ENCODE measurements at regions of chr18 and their contacts with region 1.

Region 1: DNA sequence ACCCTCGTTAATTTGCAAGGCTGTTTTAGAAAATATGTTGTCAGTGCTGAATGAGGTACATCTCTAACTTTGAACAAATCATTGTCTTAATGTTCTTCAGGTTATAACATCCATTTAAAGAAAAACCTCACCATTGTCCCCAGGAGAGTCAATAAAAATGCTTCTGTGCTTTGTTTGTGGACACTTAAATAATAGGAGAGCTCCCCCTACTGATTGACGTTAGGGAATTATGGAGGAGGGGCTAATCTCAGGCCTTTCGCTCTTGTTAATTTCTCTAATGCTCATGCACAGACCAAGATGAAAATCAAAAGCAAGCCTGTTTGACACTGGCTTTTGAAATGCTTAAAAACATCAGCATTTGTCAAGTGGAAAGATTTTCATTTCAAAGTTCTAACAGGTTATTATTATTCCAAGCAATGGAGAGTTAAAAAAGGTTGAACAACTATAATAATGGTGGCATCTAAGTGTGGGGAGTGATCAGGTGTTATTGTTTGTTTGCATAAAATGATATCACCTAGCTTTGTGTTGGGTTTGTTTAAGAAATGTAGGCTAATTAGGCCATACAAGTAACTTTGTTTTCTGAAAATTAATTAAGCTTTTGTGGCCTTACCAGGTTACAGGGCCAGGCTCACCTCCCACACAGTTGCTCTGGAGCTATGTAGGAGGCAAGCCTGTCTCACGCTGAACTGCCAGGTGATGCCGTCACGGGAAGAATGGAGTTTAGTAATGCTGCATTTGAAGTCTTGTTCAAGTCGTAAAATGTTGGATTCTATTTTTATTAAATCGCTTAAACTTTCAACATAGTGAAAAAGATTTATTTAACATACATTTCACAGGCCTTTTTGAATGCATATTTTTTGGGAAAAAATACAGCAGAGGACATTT is 51.7 kb upstream of the SMIM21 start:
- DNase-seq: peak; percentile 4
- ATAC-seq: peak; percentile 87
- H3K4me3 ChIP-seq: no peak overlapping the region
- H3K27ac ChIP-seq: no peak overlapping the region
- H3K4me1 ChIP-seq: no peaks in the 10 kb centered on the region
- H3K27me3 ChIP-seq: no peaks in the 10 kb centered on the region
- CTCF ChIP-seq: peak; percentile 38 to 64 (median 58); a peak in 5 of 6 replicates
- EP300 ChIP-seq: no peak
- POLR2A ChIP-seq: no peak
- RAD21 ChIP-seq: peak; percentile 83

Region 2: DNA sequence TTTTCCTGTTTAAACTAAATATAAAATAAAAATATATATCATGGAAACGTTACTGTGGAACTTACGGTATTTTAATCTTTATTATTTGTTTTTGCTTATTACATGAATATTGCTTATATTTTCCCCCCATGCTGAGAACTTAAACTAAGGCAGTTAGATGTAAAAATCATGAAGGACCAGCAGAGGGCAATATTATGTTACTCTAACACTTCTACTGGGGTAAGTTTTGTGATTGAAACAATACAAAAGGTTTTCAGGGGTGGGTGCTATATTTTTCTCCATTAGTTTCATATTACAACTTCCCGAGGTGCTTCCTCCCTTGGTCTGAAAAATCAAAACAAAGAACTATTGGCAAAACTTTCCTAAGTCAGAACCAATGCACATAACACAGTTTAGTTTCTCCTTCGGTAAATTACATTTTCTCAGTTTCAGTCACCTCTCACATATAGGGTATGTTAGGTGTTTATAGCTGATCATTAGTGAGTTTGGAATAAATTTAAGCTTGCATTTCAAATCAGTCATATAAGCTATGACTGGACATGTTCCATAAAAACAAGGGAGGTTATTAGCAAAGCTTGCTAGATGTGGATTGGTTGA is 826.7 kb before region 1 on chr18:
- CTCF ChIA-PET with region 1: interaction called, 24 read pairs
- POLR2A ChIA-PET with region 1: no interaction called
- RAD21 ChIA-PET with region 1: interaction called, 14 read pairs
- SMC1A ChIA-PET with region 1: interaction called, 22 read pairs
- in situ Hi-C with region 1: no loop called
- intact Hi-C with region 1: loop called (anchors 1 kb)
- DNase-seq: no peak
- ATAC-seq: peak; percentile 85
- H3K4me3 ChIP-seq: no peak overlapping the region
- H3K27ac ChIP-seq: no peak overlapping the region
- H3K4me1 ChIP-seq: no peaks in the 10 kb centered on the region
- H3K27me3 ChIP-seq: no peaks in the 10 kb centered on the region
- CTCF ChIP-seq: peak; percentile 30 to 62 (median 58); a peak in 4 of 6 replicates
- EP300 ChIP-seq: no peak
- POLR2A ChIP-seq: no peak
- RAD21 ChIP-seq: peak; percentile 78

Region 3: DNA sequence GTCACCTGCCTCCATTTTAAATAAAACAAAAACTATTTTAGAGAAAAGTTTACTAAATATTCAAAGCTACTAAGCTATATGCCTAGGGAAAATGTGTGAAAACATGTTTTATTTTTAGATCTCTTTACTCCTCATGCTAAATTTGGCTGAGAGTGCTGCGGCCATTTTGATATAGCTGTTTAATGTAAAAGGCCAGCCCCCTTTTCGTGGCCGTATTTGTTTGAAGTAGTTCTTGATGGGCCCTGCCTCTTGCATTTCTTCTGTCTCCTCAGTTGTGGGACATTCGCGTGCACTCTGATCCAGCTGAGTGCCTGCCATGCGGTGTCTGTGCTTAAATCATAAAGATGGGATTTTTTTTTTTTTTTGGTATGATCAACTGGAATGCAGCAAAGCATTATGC is 817.5 kb before region 1 on chr18:
- CTCF ChIA-PET with region 1: interaction called, 4 read pairs
- POLR2A ChIA-PET with region 1: no interaction called
- RAD21 ChIA-PET with region 1: no interaction called
- SMC1A ChIA-PET with region 1: no interaction called
- in situ Hi-C with region 1: loop called (anchors 10 kb)
- intact Hi-C with region 1: no loop called
- DNase-seq: no peak
- ATAC-seq: no peak
- H3K4me3 ChIP-seq: no peak overlapping the region
- H3K27ac ChIP-seq: no peak overlapping the region
- H3K4me1 ChIP-seq: no peaks in the 10 kb centered on the region
- H3K27me3 ChIP-seq: no peaks in the 10 kb centered on the region
- CTCF ChIP-seq: no peak
- EP300 ChIP-seq: no peak
- POLR2A ChIP-seq: no peak
- RAD21 ChIP-seq: no peak

Region 4: GRCh38 chr18:74896390-74896991 is 582.7 kb before region 1 on chr18:
- CTCF ChIA-PET with region 1: interaction called, 13 read pairs
- POLR2A ChIA-PET with region 1: no interaction called
- RAD21 ChIA-PET with region 1: interaction called, 4 read pairs
- SMC1A ChIA-PET with region 1: interaction called, 3 read pairs
- in situ Hi-C with region 1: no loop called
- intact Hi-C with region 1: loop called (anchors 2 kb)
- DNase-seq: no peak
- ATAC-seq: peak; percentile 92
- H3K4me3 ChIP-seq: no peak overlapping the region
- H3K27ac ChIP-seq: no peak overlapping the region
- H3K4me1 ChIP-seq: no peaks in the 10 kb centered on the region
- H3K27me3 ChIP-seq: no peaks in the 10 kb centered on the region
- CTCF ChIP-seq: peak; percentile 60 to 71 (median 63)
- EP300 ChIP-seq: no peak
- POLR2A ChIP-seq: no peak
- RAD21 ChIP-seq: peak; percentile 76

Region 5: GRCh38 chr18:75173125-75173432 is 306.2 kb before region 1 on chr18:
- CTCF ChIA-PET with region 1: interaction called, 12 read pairs
- POLR2A ChIA-PET with region 1: no interaction called
- RAD21 ChIA-PET with region 1: interaction called, 5 read pairs
- SMC1A ChIA-PET with region 1: interaction called, 17 read pairs
- in situ Hi-C with region 1: loop called (anchors 10 kb)
- intact Hi-C with region 1: loop called (anchors 10 kb)
- DNase-seq: peak; percentile 64
- ATAC-seq: peak; percentile 100
- H3K4me3 ChIP-seq: no peak overlapping the region
- H3K27ac ChIP-seq: no peak overlapping the region
- H3K4me1 ChIP-seq: peaks cover 15% of the 10 kb centered on the region
- H3K27me3 ChIP-seq: no peaks in the 10 kb centered on the region
- CTCF ChIP-seq: peak; percentile 44 to 66 (median 49); a peak in 5 of 6 replicates
- EP300 ChIP-seq: peak in 1 of 2 experiments; percentile 85; a peak in 2 of 4 replicates
- POLR2A ChIP-seq: no peak
- RAD21 ChIP-seq: peak; percentile 62